CD8-positive, alpha-beta T cell (primary cell): ENCODE measurements at regions of chr1 and their contacts with region 1.

Region 1: DNA sequence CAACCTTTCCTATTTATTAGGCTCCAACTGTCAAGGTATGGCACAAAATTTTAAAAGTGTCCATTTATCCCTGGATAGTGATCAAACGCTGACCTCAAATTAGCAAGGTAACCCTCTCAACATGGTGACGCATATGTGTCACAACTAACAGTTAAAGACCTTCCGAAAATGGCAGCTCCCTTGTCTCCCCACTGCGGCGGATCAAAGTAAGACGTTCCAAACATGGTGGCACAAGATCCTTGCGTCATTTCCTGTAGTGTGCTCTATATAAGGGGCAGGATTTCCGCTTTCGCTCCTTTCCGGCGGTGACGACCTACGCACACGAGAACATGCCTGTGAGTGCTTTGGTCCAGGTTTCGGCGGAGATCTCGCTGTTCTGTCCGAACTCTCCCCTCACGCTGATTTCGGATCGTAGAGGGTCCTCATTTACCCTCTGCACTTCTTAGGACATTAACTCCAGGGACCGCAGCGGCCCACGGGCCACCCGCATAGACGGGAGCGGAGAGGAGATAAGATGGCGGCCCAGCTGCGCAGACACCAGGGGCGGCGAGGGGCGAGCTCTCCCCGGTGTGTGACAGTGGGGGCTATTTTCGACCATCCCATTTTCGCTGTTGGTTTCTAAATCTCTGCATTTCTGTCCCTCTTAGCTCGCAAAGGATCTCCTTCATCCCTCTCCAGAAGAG is at the start of gene RPS27:
- DNase-seq: peak; percentile 72 to 98 (median 85)
- ATAC-seq: peak; percentile 85
- H3K4me3 ChIP-seq: peak within 1 kb of the TSS; percentile 95 to 97
- H3K4me3 Mint-ChIP-seq: peak within 1 kb of the TSS; percentile 98
- H3K27ac ChIP-seq: peak within 1 kb of the TSS; percentile 98 to 99
- H3K27ac Mint-ChIP-seq: peak within 1 kb of the TSS; percentile 99
- H3K4me1 ChIP-seq: peaks cover 43% of the 10 kb centered on the region
- H3K4me1 Mint-ChIP-seq: peaks cover 44% of the 10 kb centered on the region
- H3K27me3 ChIP-seq: no peaks in the 10 kb centered on the region
- H3K27me3 Mint-ChIP-seq: no peaks in the 10 kb centered on the region
- CTCF ChIP-seq: no peak
- total RNA-seq, gene RPS27: 6,306 to 6,659 TPM

Region 2: GRCh38 chr1:153510984-153511410 is 479.6 kb before region 1 on chr1:
- CTCF ChIA-PET with region 1: no interaction called
- POLR2A ChIA-PET with region 1: no interaction called
- intact Hi-C with region 1: loop called in 1 of 2 experiments (anchors 10 kb)
- DNase-seq: peak; percentile 53 to 89 (median 82)
- ATAC-seq: peak; percentile 90
- H3K4me3 ChIP-seq: no peak overlapping the region
- H3K4me3 Mint-ChIP-seq: no peak overlapping the region
- H3K27ac ChIP-seq: no peak overlapping the region
- H3K27ac Mint-ChIP-seq: no peak overlapping the region
- H3K4me1 ChIP-seq: no peaks in the 10 kb centered on the region
- H3K4me1 Mint-ChIP-seq: no peaks in the 10 kb centered on the region
- H3K27me3 ChIP-seq: no peaks in the 10 kb centered on the region
- H3K27me3 Mint-ChIP-seq: no peaks in the 10 kb centered on the region
- CTCF ChIP-seq: peak; percentile 94

Region 3: DNA sequence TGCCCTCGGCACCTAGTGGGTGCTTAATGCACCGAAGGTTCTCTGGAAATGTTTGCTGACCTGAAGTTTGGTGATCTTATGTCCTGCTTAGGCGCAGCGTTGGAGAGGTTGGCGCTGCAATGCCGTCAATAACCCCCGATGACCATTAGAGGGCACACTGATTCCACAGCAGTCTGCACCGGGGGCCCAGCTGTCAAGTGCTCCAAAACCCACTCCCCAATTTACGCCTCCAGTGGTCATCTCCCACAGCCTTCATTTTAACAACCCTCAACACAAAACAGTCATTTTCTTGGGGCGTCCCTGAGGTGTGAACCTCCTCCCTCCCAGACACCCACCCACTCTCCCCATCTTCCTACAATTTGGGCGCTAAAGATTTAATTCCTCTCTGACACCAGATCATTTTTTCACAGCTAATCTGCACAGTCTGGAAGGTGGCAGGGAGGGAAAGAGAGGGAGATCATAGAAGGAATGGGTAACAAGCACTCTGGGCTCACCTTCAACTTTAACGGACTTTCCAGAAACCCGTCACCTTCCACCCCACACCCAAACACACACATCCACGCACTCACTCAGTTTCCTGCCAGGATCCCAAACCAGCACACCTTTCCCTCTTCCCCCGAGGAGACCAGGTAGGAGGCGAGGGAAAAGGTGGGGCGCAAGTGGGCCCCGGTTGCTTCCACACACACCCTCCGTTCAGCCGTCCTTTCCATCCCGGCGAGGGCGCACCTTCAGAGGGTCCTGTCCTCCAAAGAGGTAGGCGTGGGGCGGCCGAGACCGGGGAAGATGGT is 312.7 kb before region 1 on chr1:
- CTCF ChIA-PET with region 1: interaction called, 12 read pairs
- POLR2A ChIA-PET with region 1: interaction called, 3 read pairs
- intact Hi-C with region 1: loop called in 1 of 2 experiments (anchors 1 kb)
- DNase-seq: peak in 6 of 9 experiments; percentile 29 to 70 (median 56)
- ATAC-seq: peak; percentile 48
- H3K4me3 ChIP-seq: peak overlapping the region; percentile 33 to 48
- H3K4me3 Mint-ChIP-seq: peak overlapping the region; percentile 91
- H3K27ac ChIP-seq: no peak overlapping the region
- H3K27ac Mint-ChIP-seq: no peak overlapping the region
- H3K4me1 ChIP-seq: peaks cover 25% of the 10 kb centered on the region
- H3K4me1 Mint-ChIP-seq: peaks cover 22% of the 10 kb centered on the region
- H3K27me3 ChIP-seq: peaks cover 29 to 30% of the 10 kb centered on the region in 2 experiments
- H3K27me3 Mint-ChIP-seq: peaks cover 45% of the 10 kb centered on the region
- CTCF ChIP-seq: peak; percentile 75

Region 4: GRCh38 chr1:153796791-153797659 is 193.6 kb before region 1 on chr1:
- CTCF ChIA-PET with region 1: interaction called, 73 read pairs
- POLR2A ChIA-PET with region 1: interaction called, 12 read pairs
- intact Hi-C with region 1: loop called (anchors 1 kb)
- DNase-seq: peak; percentile 73 to 90 (median 86)
- ATAC-seq: peak; percentile 98
- H3K4me3 ChIP-seq: no peak overlapping the region
- H3K4me3 Mint-ChIP-seq: no peak overlapping the region
- H3K27ac ChIP-seq: no peak overlapping the region
- H3K27ac Mint-ChIP-seq: peak overlapping the region; percentile 53
- H3K4me1 ChIP-seq: peaks cover 24% of the 10 kb centered on the region
- H3K4me1 Mint-ChIP-seq: peaks cover 19% of the 10 kb centered on the region
- H3K27me3 ChIP-seq: no peaks in the 10 kb centered on the region
- H3K27me3 Mint-ChIP-seq: no peaks in the 10 kb centered on the region
- CTCF ChIP-seq: peak; percentile 90

Region 5: GRCh38 chr1:153922972-153923925 is 67.4 kb before region 1 on chr1 and contains the start of gene GATAD2B:
- CTCF ChIA-PET with region 1: interaction called, 12 read pairs
- POLR2A ChIA-PET with region 1: interaction called, 44 read pairs
- intact Hi-C with region 1: loop called (anchors 1 kb)
- DNase-seq: peak; percentile 97 to 100 (median 99)
- ATAC-seq: peak; percentile 89
- H3K4me3 ChIP-seq: peak within 1 kb of the TSS; percentile 81 to 83
- H3K4me3 Mint-ChIP-seq: peak within 1 kb of the TSS; percentile 93
- H3K27ac ChIP-seq: peak within 1 kb of the TSS; percentile 83 to 95
- H3K27ac Mint-ChIP-seq: peak within 1 kb of the TSS; percentile 97
- H3K4me1 ChIP-seq: peaks cover 44% of the 10 kb centered on the region
- H3K4me1 Mint-ChIP-seq: peaks cover 44% of the 10 kb centered on the region
- H3K27me3 ChIP-seq: no peaks in the 10 kb centered on the region
- H3K27me3 Mint-ChIP-seq: no peaks in the 10 kb centered on the region
- CTCF ChIP-seq: no peak
- total RNA-seq, gene GATAD2B: 52.0 to 52.1 TPM

Region 6: DNA sequence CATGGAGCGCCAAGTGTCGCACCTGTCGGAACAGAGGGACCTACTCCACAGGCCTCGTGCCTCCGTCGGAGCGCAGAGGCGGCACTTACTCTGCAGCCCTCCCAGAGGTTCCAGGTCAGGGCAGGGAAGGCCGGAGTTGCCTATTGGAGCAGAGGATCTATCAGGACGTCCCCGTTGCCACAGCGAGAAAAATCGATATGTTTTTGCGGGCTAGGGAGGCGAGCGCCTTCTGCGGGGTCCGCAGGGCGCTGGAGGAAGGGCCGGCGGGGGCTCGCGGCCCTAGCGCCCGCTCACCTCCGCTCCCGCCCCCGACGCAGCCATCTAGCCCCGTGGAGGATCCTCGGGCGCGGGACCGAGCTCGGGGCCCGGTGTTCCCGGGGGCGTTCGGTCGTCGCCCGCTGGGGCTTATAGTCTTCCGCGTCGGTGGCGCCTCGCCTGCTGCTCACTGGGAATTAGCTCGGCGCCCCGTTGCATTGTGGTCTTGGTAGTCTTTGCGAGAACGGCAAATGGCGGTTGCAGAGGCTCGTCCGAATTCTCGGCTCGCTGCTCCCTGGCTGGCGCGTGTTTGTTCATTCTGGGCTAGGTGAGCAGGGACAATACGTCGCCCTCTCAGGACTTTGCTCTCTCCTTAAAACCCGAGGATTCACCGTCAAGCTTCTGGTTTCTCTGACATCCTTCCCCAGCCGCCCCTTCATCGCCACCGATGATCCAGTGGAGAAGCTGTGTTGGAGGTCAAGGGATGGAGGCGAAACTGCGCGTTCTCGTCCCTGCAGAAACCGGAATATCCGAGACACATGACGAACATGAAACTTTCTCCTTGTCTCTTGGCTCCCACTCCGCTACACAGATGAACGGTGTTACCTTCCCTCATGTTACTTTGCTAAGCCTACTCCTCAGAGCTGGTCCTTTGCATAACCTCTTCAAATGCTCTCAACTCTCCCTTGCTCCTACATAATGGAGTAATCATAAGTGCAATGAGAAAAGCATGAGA is 13.1 kb before region 1 on chr1 and contains the start of gene JTB:
- CTCF ChIA-PET with region 1: interaction called, 57 read pairs
- POLR2A ChIA-PET with region 1: interaction called, 56 read pairs
- intact Hi-C with region 1: loop called (anchors 1 kb)
- DNase-seq: peak; percentile 62 to 91 (median 86)
- ATAC-seq: peak; percentile 95
- H3K4me3 ChIP-seq: peak within 1 kb of the TSS; percentile 92 to 97
- H3K4me3 Mint-ChIP-seq: peak within 1 kb of the TSS; percentile 97
- H3K27ac ChIP-seq: peak within 1 kb of the TSS; percentile 74 to 77
- H3K27ac Mint-ChIP-seq: peak within 1 kb of the TSS; percentile 96
- H3K4me1 ChIP-seq: peaks cover 20% of the 10 kb centered on the region
- H3K4me1 Mint-ChIP-seq: peaks cover 35% of the 10 kb centered on the region
- H3K27me3 ChIP-seq: no peaks in the 10 kb centered on the region
- H3K27me3 Mint-ChIP-seq: no peaks in the 10 kb centered on the region
- CTCF ChIP-seq: no peak
- total RNA-seq, gene JTB: 90.4 to 91.1 TPM

Region 7: DNA sequence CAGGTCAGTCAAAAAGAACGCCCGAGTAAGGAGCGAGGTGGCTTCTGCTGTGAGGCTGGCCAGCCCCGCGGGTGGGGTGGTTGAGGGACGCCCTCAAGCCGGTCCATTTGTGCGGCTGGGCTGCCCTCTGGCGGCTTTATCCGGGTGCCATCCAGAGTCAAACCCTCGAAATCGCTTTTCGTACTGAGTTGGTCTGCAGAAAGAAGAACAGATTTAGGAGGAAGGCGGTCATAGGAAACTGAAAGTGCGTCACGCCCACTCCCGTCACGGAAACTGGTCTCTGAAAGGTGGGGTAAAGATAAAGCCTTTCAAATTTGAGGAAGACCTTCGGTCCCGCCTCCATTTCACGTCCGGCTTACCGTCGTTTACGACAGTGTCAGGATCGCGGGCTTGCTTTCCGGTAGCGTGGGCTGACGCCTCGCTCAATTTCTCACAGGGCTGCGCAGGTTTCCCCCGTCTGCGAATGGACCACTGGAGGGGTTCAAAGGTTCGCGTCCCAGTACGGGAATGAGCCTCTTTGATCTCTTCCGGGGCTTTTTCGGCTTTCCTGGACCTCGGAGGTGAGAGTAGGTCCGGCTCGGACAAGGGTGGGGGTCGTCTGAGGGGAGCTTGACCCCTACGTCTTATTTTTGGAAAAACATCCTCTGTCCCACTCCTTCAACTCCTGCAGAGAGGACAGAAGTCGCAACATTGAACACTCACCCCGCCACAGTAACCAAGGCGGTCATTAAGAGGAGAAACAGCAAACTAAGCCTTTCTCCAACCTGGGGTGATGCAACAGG is 281.8 kb after region 1 on chr1 and contains the start of gene HAX1:
- CTCF ChIA-PET with region 1: interaction called, 3 read pairs
- POLR2A ChIA-PET with region 1: interaction called, 13 read pairs
- intact Hi-C with region 1: loop called (anchors 1 kb)
- DNase-seq: peak; percentile 91 to 100 (median 94)
- ATAC-seq: peak; percentile 85
- H3K4me3 ChIP-seq: peak within 1 kb of the TSS; percentile 85 to 91
- H3K4me3 Mint-ChIP-seq: peak within 1 kb of the TSS; percentile 94
- H3K27ac ChIP-seq: peak within 1 kb of the TSS; percentile 88 to 92
- H3K27ac Mint-ChIP-seq: peak within 1 kb of the TSS; percentile 98
- H3K4me1 ChIP-seq: peaks cover 22% of the 10 kb centered on the region
- H3K4me1 Mint-ChIP-seq: peaks cover 38% of the 10 kb centered on the region
- H3K27me3 ChIP-seq: no peaks in the 10 kb centered on the region
- H3K27me3 Mint-ChIP-seq: no peaks in the 10 kb centered on the region
- CTCF ChIP-seq: peak; percentile 75
- total RNA-seq, gene HAX1: 56.8 to 58.4 TPM